WTC11 (cell line): ENCODE measurements at regions of chr13 and their contacts with region 1.

Region 1: DNA sequence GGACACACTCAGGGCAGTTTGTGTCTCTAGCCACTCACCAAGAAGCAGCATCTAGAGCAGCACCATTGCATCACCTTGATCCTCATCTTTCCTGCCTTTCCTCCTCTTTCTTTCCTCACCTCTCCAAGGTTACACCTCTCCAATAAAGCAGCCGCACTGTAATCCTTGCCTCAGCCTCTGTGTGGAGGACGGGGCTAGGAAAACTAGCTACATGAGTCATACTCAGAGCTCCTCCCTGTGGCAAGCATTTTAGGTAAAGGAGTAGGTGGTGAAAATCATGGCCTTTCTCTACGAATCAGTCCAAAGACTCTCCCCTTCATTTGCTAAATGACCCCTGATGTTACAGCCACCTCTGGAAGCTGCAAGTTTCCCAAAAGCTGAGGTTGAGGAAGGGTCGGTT is 108.9 kb downstream of the DNAJC15 start:
- DNase-seq: peak; percentile 41
- ATAC-seq: peak; percentile 92
- H3K4me3 Mint-ChIP-seq: no peak overlapping the region
- H3K27ac Mint-ChIP-seq: no peak overlapping the region
- H3K4me1 Mint-ChIP-seq: peaks cover 60% of the 10 kb centered on the region
- H3K27me3 Mint-ChIP-seq: no peaks in the 10 kb centered on the region
- CTCF ChIP-seq: no peak

Region 2: GRCh38 chr13:43143591-43143990 is 11.3 kb after region 1 on chr13:
- CTCF ChIA-PET with region 1: interaction called, 15 read pairs
- POLR2A ChIA-PET with region 1: no interaction called
- DNase-seq: no peak
- ATAC-seq: no peak
- H3K4me3 Mint-ChIP-seq: no peak overlapping the region
- H3K27ac Mint-ChIP-seq: no peak overlapping the region
- H3K4me1 Mint-ChIP-seq: peaks cover 40% of the 10 kb centered on the region
- H3K27me3 Mint-ChIP-seq: no peaks in the 10 kb centered on the region; the same call in 1 of the 2 replicates
- CTCF ChIP-seq: no peak

Region 3: DNA sequence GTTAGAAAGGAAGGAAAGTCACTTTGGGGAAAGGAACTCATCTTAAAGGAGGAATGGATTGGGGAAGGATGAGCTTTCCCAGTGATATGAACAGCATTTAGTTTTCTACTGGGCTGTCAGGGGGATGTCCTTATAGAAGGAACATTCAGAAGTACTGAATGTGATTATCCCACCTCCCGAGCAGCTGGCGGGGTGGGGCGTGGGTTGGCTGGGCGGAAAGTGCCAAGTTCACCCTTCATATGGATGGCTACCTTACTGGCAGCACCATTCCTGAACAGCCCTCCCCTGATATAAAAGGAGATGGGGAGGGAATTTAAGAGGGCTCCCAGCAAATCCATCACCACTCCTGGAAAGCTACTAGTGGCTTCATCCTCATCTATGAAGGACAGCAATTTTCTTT is 81.9 kb after region 1 on chr13:
- CTCF ChIA-PET with region 1: no interaction called
- POLR2A ChIA-PET with region 1: no interaction called
- DNase-seq: no peak
- ATAC-seq: no peak
- H3K4me3 Mint-ChIP-seq: no peak overlapping the region
- H3K27ac Mint-ChIP-seq: no peak overlapping the region
- H3K4me1 Mint-ChIP-seq: no peaks in the 10 kb centered on the region
- H3K27me3 Mint-ChIP-seq: no peaks in the 10 kb centered on the region; the same call in 1 of the 2 replicates
- CTCF ChIP-seq: no peak